ENCODE measurements at regions of chr15 and their contacts with region 1.

Region 1: GRCh38 chr15:82540055-82540983 is at the start of gene RPS17:
- DNase-seq: peak; percentile 99
- ATAC-seq: peak; percentile 98
- total RNA-seq, gene RPS17: 707 TPM

Region 2: GRCh38 chr15:82985688-82986441 is 445.5 kb after region 1 on chr15 and contains the start of gene RAMAC:
- intact Hi-C with region 1: loop called (anchors 10 kb)
- DNase-seq: peak; percentile 95
- ATAC-seq: peak; percentile 99
- total RNA-seq, gene RAMAC: 11.8 TPM

Measured in Right ventricle myocardium superior (tissue), 1 donor.